ENCODE measurements at regions of chr3 and their contacts with region 1.

Region 1: DNA sequence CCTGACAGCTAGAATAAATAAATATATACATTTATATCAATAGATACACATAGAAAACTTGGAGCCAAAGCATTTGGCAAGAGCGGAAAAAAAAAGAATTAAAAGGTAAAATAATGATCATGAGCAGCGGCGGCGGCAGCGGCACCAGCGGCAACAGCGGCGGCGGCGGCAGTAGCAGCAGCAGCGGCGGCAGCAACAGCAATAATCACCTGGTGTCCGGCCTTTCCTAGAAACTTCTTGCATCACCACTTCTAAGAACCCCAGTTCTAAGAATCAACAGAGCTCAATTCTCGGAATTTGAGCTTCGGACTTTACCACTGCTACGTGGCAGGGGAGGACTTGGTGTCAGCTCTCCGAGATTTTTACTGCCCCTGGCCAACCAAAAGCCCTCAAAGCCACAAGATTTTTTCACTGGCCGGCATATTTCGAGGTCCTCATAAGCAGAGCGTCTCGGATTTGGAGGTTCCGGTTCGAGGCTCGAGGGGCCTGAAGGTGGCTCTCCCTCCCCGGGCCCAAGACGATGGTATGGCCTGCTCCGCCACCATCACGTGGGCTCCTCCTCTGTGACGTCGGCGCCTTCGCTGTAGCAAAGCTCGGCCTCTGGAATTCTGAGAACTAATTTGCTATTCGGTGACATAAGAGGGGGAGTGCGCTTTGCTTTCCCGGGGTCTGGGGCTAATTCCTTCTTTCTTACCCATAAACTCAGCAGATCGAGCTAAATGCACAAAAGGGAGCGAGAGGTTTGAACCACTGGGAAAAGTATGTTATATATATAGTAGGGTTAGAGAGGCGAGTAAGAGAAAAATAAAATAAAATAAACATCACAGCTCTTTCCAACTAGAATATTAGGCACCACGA is at the start of gene BCL6:
- DNase-seq: peak; percentile 97
- H3K4me3 ChIP-seq: peak within 1 kb of the TSS; percentile 87
- H3K27ac ChIP-seq: peak within 1 kb of the TSS; percentile 100
- H3K27me3 ChIP-seq: no peaks in the 10 kb centered on the region
- CTCF ChIP-seq: no peak

Region 2: GRCh38 chr3:187456250-187456649 is 289.2 kb before region 1 on chr3:
- in situ Hi-C with region 1: no loop called
- DNase-seq: no peak
- H3K4me3 ChIP-seq: no peak overlapping the region
- H3K27ac ChIP-seq: no peak overlapping the region
- H3K27me3 ChIP-seq: no peaks in the 10 kb centered on the region
- CTCF ChIP-seq: no peak

Region 3: DNA sequence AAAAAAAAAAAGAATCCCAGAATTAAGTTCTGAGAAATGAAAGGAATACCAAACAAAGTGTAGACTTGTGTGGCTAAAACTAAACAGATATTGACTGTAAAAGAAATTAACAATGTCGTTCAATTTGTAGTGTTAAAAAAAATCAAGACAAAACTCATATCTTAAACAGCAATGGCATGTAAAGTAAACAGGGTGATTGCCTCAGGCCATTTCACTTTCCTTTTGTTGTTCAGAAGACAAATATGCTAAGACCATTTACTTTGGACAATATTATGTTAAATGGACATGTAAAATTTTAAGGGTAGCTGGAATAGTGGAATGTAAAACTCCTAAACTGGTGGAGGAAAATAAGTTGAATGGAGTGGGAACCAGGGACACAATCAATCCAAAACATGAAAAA is 238.2 kb before region 1 on chr3:
- in situ Hi-C with region 1: no loop called
- DNase-seq: no peak
- H3K4me3 ChIP-seq: no peak overlapping the region
- H3K27ac ChIP-seq: no peak overlapping the region
- H3K27me3 ChIP-seq: no peaks in the 10 kb centered on the region
- CTCF ChIP-seq: no peak

Region 4: GRCh38 chr3:188294823-188295487 is 549.5 kb after region 1 on chr3:
- in situ Hi-C with region 1: loop called (anchors 25 kb)
- DNase-seq: peak; percentile 93
- H3K4me3 ChIP-seq: peak overlapping the region; percentile 6
- H3K27ac ChIP-seq: peak overlapping the region; percentile 82
- H3K27me3 ChIP-seq: no peaks in the 10 kb centered on the region
- CTCF ChIP-seq: no peak

Region 5: GRCh38 chr3:188400494-188401243 is 655.2 kb after region 1 on chr3:
- in situ Hi-C with region 1: no loop called
- DNase-seq: no peak
- H3K4me3 ChIP-seq: no peak overlapping the region
- H3K27ac ChIP-seq: no peak overlapping the region
- H3K27me3 ChIP-seq: no peaks in the 10 kb centered on the region
- CTCF ChIP-seq: no peak

Region 6: DNA sequence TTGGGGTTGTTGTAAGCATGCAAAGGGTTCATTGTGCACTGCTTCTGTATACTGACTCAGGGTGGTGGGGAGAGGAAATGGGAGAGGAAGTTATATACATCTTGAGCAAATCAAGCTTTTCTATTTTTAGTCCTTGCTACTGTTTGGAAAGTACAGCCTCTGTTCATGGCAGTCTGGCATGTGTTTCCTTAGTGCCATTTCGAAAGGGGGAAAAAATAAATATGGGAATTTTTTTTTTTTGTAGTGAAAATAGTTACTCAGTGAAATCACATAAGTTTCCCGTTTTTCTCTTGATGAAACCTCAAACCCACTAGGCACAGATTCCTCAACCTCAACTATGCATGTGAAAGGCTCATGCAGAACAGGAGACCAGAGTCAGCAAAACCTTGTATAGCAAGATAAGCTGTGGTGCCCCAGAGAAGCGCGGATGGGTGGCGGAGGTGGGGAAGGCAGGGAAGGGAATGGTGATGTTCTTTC is 761.9 kb after region 1 on chr3:
- in situ Hi-C with region 1: loop called (anchors 25 kb)
- DNase-seq: peak; percentile 89
- H3K4me3 ChIP-seq: no peak overlapping the region
- H3K27ac ChIP-seq: peak overlapping the region; percentile 56
- H3K27me3 ChIP-seq: no peaks in the 10 kb centered on the region
- CTCF ChIP-seq: no peak

Region 7: GRCh38 chr3:188683032-188683521 is 937.6 kb after region 1 on chr3:
- in situ Hi-C with region 1: loop called (anchors 25 kb)
- DNase-seq: peak; percentile 92
- H3K4me3 ChIP-seq: no peak overlapping the region
- H3K27ac ChIP-seq: peak overlapping the region; percentile 75
- H3K27me3 ChIP-seq: no peaks in the 10 kb centered on the region
- CTCF ChIP-seq: no peak